A673 (cell line): ENCODE measurements at regions of chr6 and their contacts with region 1.

Region 1: DNA sequence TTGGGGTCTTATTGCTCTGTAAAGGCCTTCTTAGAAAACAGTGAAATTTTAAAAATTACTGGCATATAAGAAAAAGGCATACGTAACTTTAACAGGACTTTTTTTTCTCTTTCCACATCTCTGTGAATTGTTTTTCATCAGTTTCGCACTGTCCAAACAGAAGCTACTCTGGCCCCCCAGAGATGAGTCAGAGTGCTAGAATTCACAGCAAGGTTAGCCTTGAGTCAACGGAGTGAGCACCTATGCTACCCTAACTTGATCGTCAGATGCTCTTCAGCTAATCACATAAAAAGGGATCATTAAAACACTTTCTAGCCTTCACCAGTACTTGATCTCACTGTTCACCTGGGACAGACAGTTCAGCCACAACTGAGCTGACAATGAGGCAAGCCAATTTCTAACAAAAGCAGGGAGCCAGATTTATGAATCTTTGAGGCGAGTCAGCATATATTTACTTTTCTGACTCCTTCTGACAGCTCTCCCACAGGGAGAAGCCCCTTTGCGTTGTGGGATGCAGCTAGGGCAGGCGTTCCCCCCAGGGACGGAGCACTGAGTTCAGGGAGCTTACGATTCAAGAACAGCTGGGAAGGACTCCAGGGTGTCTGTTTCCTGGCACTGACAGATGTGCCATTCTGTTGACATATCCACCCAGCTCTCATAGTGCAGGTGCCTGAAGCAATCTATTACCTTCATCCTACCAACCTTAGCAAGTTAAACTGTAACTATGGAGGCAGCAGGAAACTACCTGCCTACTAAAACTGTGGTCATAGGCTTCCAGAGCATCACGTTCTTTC is 46.4 kb upstream of the SPDEF start:
- DNase-seq: no peak
- H3K4me3 ChIP-seq: no peak overlapping the region
- H3K27ac ChIP-seq: no peak overlapping the region
- H3K4me1 ChIP-seq: peaks cover 5% of the 10 kb centered on the region
- H3K27me3 ChIP-seq: no peaks in the 10 kb centered on the region
- CTCF ChIP-seq: no peak

Region 2: GRCh38 chr6:34196126-34196830 is 406.2 kb before region 1 on chr6:
- CTCF ChIA-PET with region 1: no interaction called
- POLR2A ChIA-PET with region 1: no interaction called
- intact Hi-C with region 1: loop called (anchors 10 kb)
- DNase-seq: peak; percentile 85
- H3K4me3 ChIP-seq: peak overlapping the region; percentile 44
- H3K27ac ChIP-seq: no peak overlapping the region
- H3K4me1 ChIP-seq: no peaks in the 10 kb centered on the region
- H3K27me3 ChIP-seq: no peaks in the 10 kb centered on the region
- CTCF ChIP-seq: peak; percentile 98

Region 3: GRCh38 chr6:34223956-34224940 is 378.3 kb before region 1 on chr6:
- CTCF ChIA-PET with region 1: no interaction called
- POLR2A ChIA-PET with region 1: no interaction called
- intact Hi-C with region 1: no loop called
- DNase-seq: peak; percentile 95
- H3K4me3 ChIP-seq: peak overlapping the region; percentile 47
- H3K27ac ChIP-seq: peak overlapping the region; percentile 86
- H3K4me1 ChIP-seq: peaks cover 14% of the 10 kb centered on the region
- H3K27me3 ChIP-seq: no peaks in the 10 kb centered on the region
- CTCF ChIP-seq: no peak

Region 4: GRCh38 chr6:35669451-35670045 is 1067.0 kb after region 1 on chr6:
- CTCF ChIA-PET with region 1: no interaction called
- POLR2A ChIA-PET with region 1: no interaction called
- intact Hi-C with region 1: no loop called
- DNase-seq: peak; percentile 42
- H3K4me3 ChIP-seq: peak overlapping the region; percentile 26
- H3K27ac ChIP-seq: peak overlapping the region; percentile 60
- H3K4me1 ChIP-seq: peaks cover 27% of the 10 kb centered on the region
- H3K27me3 ChIP-seq: no peaks in the 10 kb centered on the region
- CTCF ChIP-seq: no peak